SK-N-SH (cell line): ENCODE measurements at regions of chr17 and their contacts with region 1.

Region 1: GRCh38 chr17:32997753-32998632 is 6.3 kb downstream of the SPACA3 start:
- DNase-seq: peak; percentile 82
- H3K4me3 ChIP-seq: peak overlapping the region; percentile 17 to 47; a peak in 3 of 4 replicates
- H3K27ac ChIP-seq: no peak overlapping the region
- H3K4me1 ChIP-seq: peaks cover 0 to 6% of the 10 kb centered on the region in 2 experiments; a peak in 1 of 4 replicates
- H3K27me3 ChIP-seq: peaks cover 12% of the 10 kb centered on the region
- CTCF ChIP-seq: peak; percentile 87
- EP300 ChIP-seq: no peak
- RAD21 ChIP-seq: peak; percentile 71

Region 2: GRCh38 chr17:32936894-32937500 is 61.0 kb before region 1 on chr17:
- CTCF ChIA-PET with region 1: interaction called, 11 read pairs
- POLR2A ChIA-PET with region 1: no interaction called
- DNase-seq: peak; percentile 80
- H3K4me3 ChIP-seq: peak overlapping the region in 1 of 2 experiments; percentile 40; a peak in 1 of 4 replicates
- H3K27ac ChIP-seq: no peak overlapping the region; a peak in 1 of 4 replicates
- H3K4me1 ChIP-seq: no peaks in the 10 kb centered on the region; a peak in 1 of 4 replicates
- H3K27me3 ChIP-seq: no peaks in the 10 kb centered on the region
- CTCF ChIP-seq: peak; percentile 74
- EP300 ChIP-seq: no peak
- RAD21 ChIP-seq: peak; percentile 56

Region 3: GRCh38 chr17:32976131-32976530 is 21.9 kb before region 1 on chr17:
- CTCF ChIA-PET with region 1: interaction called, 11 read pairs
- POLR2A ChIA-PET with region 1: no interaction called
- DNase-seq: no peak
- H3K4me3 ChIP-seq: no peak overlapping the region
- H3K27ac ChIP-seq: no peak overlapping the region
- H3K4me1 ChIP-seq: no peaks in the 10 kb centered on the region
- H3K27me3 ChIP-seq: no peaks in the 10 kb centered on the region
- CTCF ChIP-seq: no peak
- EP300 ChIP-seq: no peak
- RAD21 ChIP-seq: no peak

Region 4: DNA sequence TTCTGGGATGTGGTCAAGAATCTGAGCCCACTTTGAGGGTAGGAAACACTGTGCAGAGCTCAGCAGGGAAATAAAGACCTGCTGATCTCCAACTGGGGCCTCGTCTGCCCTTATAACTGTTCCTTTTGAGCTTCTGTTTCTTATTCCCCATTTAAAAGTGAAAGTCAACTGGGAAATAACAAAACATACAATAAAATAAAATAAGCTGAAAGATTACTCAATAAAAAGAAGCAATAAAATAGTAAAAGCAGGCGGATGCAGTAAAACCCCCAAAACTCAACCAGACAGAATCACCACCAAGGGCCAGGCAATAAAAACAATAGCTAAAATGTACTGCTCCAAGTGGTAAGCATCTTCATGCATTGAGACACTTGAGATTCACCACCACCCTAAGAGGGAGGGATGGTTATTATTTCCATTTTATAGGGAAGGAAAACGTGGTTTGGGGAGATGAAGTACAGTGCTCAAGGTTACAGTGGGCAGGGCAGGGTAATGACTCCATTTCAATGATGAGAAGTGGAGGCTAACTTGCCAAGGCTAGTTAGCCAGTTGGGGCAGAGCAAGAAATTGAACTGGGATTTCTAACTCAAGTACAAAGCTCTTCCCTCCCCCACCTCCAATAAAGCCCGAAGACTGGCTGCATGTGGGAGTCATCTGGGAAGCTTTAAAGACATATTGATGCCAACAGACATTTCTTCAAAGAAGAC is 12.8 kb before region 1 on chr17:
- CTCF ChIA-PET with region 1: interaction called, 21 read pairs
- POLR2A ChIA-PET with region 1: no interaction called
- DNase-seq: no peak
- H3K4me3 ChIP-seq: no peak overlapping the region
- H3K27ac ChIP-seq: no peak overlapping the region
- H3K4me1 ChIP-seq: no peaks in the 10 kb centered on the region
- H3K27me3 ChIP-seq: no peaks in the 10 kb centered on the region
- CTCF ChIP-seq: no peak
- EP300 ChIP-seq: no peak
- RAD21 ChIP-seq: no peak

Region 5: GRCh38 chr17:33012522-33013033 is 14.6 kb after region 1 on chr17:
- CTCF ChIA-PET with region 1: interaction called, 48 read pairs
- POLR2A ChIA-PET with region 1: no interaction called
- DNase-seq: no peak
- H3K4me3 ChIP-seq: no peak overlapping the region
- H3K27ac ChIP-seq: peak overlapping the region in 1 of 2 experiments; percentile 43; a peak in 1 of 4 replicates
- H3K4me1 ChIP-seq: peaks cover 5 to 10% of the 10 kb centered on the region in 2 experiments; a peak in 2 of 4 replicates
- H3K27me3 ChIP-seq: no peaks in the 10 kb centered on the region
- CTCF ChIP-seq: no peak
- EP300 ChIP-seq: 0 out of 4 replicates have a peak, but pooled peaks of 1 of the 2 experiments have one; percentile 26
- RAD21 ChIP-seq: no peak